ENCODE measurements at regions of chr2 and their contacts with region 1.

Region 1: DNA sequence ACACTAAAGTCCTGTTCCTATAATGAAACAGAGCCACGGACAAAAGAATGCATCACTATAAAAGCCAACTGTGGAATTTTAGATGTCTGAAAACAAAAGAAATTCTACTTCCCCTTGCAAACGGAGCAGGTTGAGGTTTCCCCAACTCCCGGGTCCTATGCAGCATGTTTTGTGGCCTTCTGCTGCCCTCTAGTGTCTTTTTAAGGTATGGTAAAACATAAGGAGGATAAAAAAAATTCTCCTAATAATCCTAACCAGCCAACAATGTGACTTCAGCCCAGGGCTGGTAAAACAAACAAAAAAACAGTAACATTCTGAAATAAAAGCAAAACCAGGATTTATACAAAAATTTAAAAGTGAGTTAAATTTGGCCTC is 539.5 kb downstream of the NRXN1 start:
- DNase-seq: peak; percentile 5
- ATAC-seq: peak; percentile 94
- H3K4me3 ChIP-seq: no peak overlapping the region
- H3K27ac ChIP-seq: no peak overlapping the region
- H3K4me1 ChIP-seq: no peaks in the 10 kb centered on the region
- H3K27me3 ChIP-seq: no peaks in the 10 kb centered on the region
- CTCF ChIP-seq: peak; percentile 61 to 69 (median 64)
- EP300 ChIP-seq: no peak
- POLR2A ChIP-seq: no peak
- RAD21 ChIP-seq: peak; percentile 75

Region 2: DNA sequence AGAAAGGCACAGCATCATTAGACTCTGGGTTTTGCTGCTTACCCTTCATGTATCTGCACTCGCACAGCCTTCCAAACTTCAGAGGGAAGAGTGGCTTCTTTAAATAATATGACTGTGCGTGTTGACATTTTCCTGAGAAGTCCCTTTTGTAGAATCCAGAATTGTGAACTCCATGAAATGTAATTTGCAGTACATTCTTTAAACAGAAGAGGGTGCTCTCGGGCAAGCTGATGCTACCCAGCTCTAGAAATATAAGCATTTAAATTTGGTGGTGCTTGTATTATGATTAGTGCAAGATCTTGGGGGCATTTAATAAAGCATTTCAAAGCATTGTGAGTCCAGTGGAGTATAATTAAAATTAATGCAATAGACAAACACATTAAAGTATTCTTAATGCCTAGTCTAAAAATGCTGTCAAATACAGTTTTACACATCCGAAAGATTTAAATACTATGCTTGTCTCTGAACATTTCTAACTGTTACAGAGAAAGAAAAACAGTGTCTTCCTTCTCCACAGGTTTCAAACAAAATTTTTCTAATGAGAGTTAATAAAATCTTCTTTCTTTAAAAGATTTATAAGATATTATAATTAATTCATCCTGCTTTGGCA is 1892.2 kb before region 1 on chr2:
- CTCF ChIA-PET with region 1: no interaction called
- POLR2A ChIA-PET with region 1: no interaction called
- RAD21 ChIA-PET with region 1: no interaction called
- SMC1A ChIA-PET with region 1: no interaction called
- in situ Hi-C with region 1: no loop called
- intact Hi-C with region 1: loop called (anchors 10 kb)
- DNase-seq: no peak
- ATAC-seq: peak; percentile 77
- H3K4me3 ChIP-seq: no peak overlapping the region
- H3K27ac ChIP-seq: no peak overlapping the region
- H3K4me1 ChIP-seq: no peaks in the 10 kb centered on the region
- H3K27me3 ChIP-seq: peaks cover 0 to 2% of the 10 kb centered on the region in 2 experiments; a peak in 1 of 4 replicates
- CTCF ChIP-seq: peak; percentile 61 to 70 (median 68)
- EP300 ChIP-seq: no peak
- POLR2A ChIP-seq: no peak
- RAD21 ChIP-seq: peak; percentile 81

Region 3: GRCh38 chr2:49616800-49617199 is 875.7 kb before region 1 on chr2:
- CTCF ChIA-PET with region 1: interaction called, 6 read pairs
- POLR2A ChIA-PET with region 1: no interaction called
- RAD21 ChIA-PET with region 1: no interaction called
- SMC1A ChIA-PET with region 1: no interaction called
- in situ Hi-C with region 1: no loop called
- intact Hi-C with region 1: loop called (anchors 2 kb)
- DNase-seq: no peak
- ATAC-seq: peak; percentile 65
- H3K4me3 ChIP-seq: no peak overlapping the region
- H3K27ac ChIP-seq: no peak overlapping the region
- H3K4me1 ChIP-seq: no peaks in the 10 kb centered on the region
- H3K27me3 ChIP-seq: no peaks in the 10 kb centered on the region
- CTCF ChIP-seq: peak; percentile 31 to 43 (median 37); a peak in 4 of 6 replicates
- EP300 ChIP-seq: no peak
- POLR2A ChIP-seq: no peak
- RAD21 ChIP-seq: peak; percentile 50

Region 4: GRCh38 chr2:49693961-49694360 is 798.5 kb before region 1 on chr2:
- CTCF ChIA-PET with region 1: no interaction called
- POLR2A ChIA-PET with region 1: no interaction called
- RAD21 ChIA-PET with region 1: no interaction called
- SMC1A ChIA-PET with region 1: no interaction called
- in situ Hi-C with region 1: no loop called
- intact Hi-C with region 1: loop called (anchors 10 kb)
- DNase-seq: no peak
- ATAC-seq: no peak
- H3K4me3 ChIP-seq: no peak overlapping the region
- H3K27ac ChIP-seq: no peak overlapping the region
- H3K4me1 ChIP-seq: no peaks in the 10 kb centered on the region
- H3K27me3 ChIP-seq: no peaks in the 10 kb centered on the region; a peak in 1 of 4 replicates
- CTCF ChIP-seq: no peak
- EP300 ChIP-seq: no peak
- POLR2A ChIP-seq: no peak
- RAD21 ChIP-seq: no peak

Region 5: DNA sequence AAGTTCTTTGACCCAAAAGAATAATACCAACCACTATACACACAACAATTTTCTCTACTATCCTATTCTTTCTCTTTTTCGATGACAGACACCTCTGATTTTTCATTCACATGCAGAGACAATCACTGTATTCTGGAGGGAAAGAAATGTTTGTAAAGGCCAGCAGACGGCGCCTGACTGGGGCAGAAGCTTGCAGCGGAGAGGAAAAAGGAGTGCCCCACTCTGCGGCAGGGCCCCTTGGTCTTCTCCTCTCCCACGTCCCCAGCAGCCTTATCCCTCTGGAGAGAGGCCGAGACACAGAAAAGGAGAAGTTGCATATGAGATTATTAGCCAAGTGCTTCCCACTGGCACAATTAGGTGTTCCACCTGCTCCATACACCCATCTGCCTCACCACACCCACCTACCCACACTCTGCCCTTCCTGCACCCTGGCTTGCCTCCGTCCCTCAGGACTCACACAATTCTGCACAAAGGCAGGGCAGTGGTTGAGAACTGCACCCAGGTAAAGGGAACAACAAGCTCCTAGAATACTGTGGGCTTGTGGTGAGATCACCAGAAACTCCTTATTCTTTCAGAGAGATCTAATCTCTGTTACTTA is 147.9 kb before region 1 on chr2:
- CTCF ChIA-PET with region 1: interaction called, 3 read pairs
- POLR2A ChIA-PET with region 1: no interaction called
- RAD21 ChIA-PET with region 1: no interaction called
- SMC1A ChIA-PET with region 1: no interaction called
- in situ Hi-C with region 1: no loop called
- intact Hi-C with region 1: loop called (anchors 5 kb)
- DNase-seq: no peak
- ATAC-seq: peak; percentile 59
- H3K4me3 ChIP-seq: no peak overlapping the region
- H3K27ac ChIP-seq: no peak overlapping the region
- H3K4me1 ChIP-seq: no peaks in the 10 kb centered on the region
- H3K27me3 ChIP-seq: peaks cover 2 to 6% of the 10 kb centered on the region in 2 experiments
- CTCF ChIP-seq: peak in 1 of 3 experiments; percentile 17; a peak in 1 of 6 replicates
- EP300 ChIP-seq: no peak
- POLR2A ChIP-seq: no peak
- RAD21 ChIP-seq: no peak

Region 6: DNA sequence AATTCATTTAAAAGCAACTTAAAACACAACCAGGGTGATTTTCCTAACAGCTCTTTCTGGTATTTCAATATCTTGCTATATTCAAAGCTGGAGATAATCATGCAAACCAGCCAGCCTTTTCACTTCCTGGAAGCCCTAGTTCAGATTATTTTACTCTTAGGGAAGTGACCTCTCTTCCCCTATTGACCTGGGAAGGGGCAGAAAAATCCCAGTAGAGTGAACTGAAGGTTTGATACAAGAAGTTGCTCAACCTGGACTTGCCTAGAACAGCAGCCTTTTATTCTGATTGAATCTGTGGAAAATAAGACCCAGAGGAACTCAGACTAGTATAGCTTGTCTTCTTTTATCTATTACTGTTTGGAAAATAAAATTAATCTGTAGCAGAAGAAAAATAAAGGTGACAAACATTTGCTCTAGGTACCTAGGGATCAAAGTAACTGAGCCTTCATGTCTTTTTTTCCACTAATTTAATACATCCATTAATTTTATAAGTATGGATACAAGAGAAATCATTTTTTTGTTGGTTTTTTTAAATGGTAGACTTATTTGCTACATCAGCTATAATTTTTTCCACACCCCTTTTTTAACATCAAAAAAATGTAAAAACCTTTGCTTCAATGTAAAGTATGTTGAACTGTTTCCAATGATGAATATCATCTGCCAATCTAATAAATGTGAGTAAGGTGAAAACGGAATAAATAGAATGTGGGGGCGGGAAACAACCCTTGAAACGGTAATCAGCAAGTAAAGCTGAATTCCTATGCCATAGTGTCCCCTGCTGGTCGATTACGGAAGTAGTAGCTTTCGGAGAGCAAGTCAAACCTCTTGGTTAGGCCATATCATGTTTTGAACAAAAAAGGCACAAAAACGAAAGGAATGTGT is 90.5 kb before region 1 on chr2:
- CTCF ChIA-PET with region 1: interaction called, 16 read pairs
- POLR2A ChIA-PET with region 1: no interaction called
- RAD21 ChIA-PET with region 1: interaction called, 3 read pairs
- SMC1A ChIA-PET with region 1: interaction called, 5 read pairs
- in situ Hi-C with region 1: no loop called
- intact Hi-C with region 1: no loop called
- DNase-seq: no peak
- ATAC-seq: peak; percentile 80
- H3K4me3 ChIP-seq: no peak overlapping the region
- H3K27ac ChIP-seq: no peak overlapping the region
- H3K4me1 ChIP-seq: no peaks in the 10 kb centered on the region
- H3K27me3 ChIP-seq: no peaks in the 10 kb centered on the region
- CTCF ChIP-seq: peak; percentile 80 to 90 (median 86)
- EP300 ChIP-seq: no peak
- POLR2A ChIP-seq: no peak
- RAD21 ChIP-seq: peak; percentile 85

Region 7: DNA sequence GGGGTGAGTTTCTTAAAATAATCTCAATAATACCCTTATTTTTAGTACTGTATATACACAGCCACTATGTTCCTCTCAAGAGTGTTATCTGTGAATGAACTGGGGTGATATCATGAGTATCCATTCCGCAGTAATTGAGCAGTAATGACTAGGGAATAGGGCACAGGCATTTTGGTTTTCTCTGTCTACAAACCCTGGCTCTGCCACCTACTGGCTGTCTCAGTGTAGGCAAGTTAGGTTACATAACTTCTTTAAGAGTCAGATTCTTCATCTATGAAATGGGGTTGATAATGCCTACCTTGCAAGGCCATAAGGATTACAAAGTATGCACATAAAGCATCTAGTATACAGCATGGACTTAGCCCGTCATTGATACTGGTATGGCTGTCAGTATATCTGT is 16.3 kb before region 1 on chr2:
- CTCF ChIA-PET with region 1: interaction called, 15 read pairs
- POLR2A ChIA-PET with region 1: no interaction called
- RAD21 ChIA-PET with region 1: interaction called, 3 read pairs
- SMC1A ChIA-PET with region 1: interaction called, 7 read pairs
- in situ Hi-C with region 1: no loop called
- intact Hi-C with region 1: no loop called
- DNase-seq: no peak
- ATAC-seq: peak; percentile 37; the same call in 1 of the 3 replicates
- H3K4me3 ChIP-seq: no peak overlapping the region
- H3K27ac ChIP-seq: no peak overlapping the region
- H3K4me1 ChIP-seq: no peaks in the 10 kb centered on the region
- H3K27me3 ChIP-seq: no peaks in the 10 kb centered on the region
- CTCF ChIP-seq: peak in 2 of 3 experiments; percentile 26 to 39; a peak in 2 of 6 replicates
- EP300 ChIP-seq: no peak
- POLR2A ChIP-seq: no peak
- RAD21 ChIP-seq: no peak